ENCODE measurements at regions of chr10 and their contacts with region 1.

Region 1: DNA sequence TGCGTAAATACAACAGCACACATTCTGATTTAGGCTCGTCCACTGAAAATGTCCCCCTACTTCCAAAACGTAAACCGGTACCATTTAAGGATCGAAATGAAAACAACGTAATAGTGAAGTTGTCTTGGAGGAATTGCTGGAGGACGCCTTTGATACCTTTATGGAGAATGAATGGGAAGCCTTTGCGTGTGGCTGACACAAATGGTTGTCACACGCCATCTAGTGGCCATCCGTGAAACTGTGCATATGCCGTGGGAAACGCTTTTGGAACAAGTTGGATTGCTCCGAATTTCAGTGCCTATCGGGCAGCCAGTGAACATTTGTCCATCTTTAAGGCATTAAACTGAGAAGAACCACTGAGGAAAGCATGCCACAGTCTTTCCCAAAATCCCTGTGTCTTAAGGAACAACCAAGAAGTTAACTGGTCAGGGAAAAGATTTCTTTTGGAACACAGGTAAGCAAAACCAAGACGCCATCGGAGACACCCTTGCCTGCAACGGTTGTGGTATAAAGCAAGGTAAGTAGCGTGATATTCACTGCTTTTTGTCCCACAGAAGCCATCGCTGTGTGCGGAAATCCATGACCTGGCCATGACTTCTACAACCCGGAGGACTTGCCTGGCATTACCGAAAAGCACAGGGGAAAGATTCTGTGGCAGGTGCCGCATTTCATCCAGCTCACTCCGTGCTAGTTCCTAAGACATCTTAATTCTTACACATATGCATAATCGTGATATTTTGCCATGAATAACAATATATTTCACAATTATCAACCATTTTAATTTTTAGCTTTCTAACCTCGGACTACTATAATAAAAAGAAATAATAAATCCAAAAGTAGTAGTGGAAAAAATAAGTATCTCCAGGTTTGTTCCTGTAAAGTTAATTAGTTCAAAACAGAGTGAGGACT is 100.6 kb downstream of the FAM204A start:
- DNase-seq: peak; percentile 75
- ATAC-seq: no peak
- H3K4me3 Mint-ChIP-seq: no peak overlapping the region
- H3K27ac Mint-ChIP-seq: no peak overlapping the region
- H3K4me1 Mint-ChIP-seq: no peaks in the 10 kb centered on the region
- H3K27me3 Mint-ChIP-seq: peaks cover 30% of the 10 kb centered on the region

Region 2: DNA sequence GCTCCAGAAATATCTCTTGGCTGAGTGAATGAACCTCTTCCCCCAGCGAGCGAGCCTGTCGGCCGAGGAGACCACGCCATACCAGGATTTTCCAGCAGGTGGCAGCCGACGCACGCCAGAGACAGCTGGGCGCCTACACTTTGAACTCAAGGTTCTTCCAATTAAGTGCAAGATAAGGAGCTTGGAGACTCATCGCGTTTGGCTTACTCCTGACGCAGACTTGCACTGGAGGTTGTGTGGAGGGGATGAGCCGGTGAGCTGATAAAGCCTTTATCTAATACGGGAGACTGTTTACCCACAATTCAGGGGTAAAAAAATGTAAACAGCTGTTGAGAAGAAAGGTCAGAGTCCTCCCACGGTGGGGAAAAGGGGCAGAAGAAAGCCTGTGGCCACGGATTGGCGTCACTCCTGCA is 744.9 kb before region 1 on chr10:
- CTCF ChIA-PET with region 1: interaction called, 16 read pairs
- DNase-seq: peak; percentile 69
- ATAC-seq: peak; percentile 76
- H3K4me3 Mint-ChIP-seq: no peak overlapping the region
- H3K27ac Mint-ChIP-seq: no peak overlapping the region
- H3K4me1 Mint-ChIP-seq: peaks cover 3% of the 10 kb centered on the region
- H3K27me3 Mint-ChIP-seq: peaks cover 24% of the 10 kb centered on the region

Region 3: GRCh38 chr10:117537436-117537903 is 704.0 kb before region 1 on chr10:
- CTCF ChIA-PET with region 1: interaction called, 10 read pairs
- DNase-seq: no peak
- ATAC-seq: no peak
- H3K4me3 Mint-ChIP-seq: no peak overlapping the region
- H3K27ac Mint-ChIP-seq: no peak overlapping the region
- H3K4me1 Mint-ChIP-seq: peaks cover 5% of the 10 kb centered on the region
- H3K27me3 Mint-ChIP-seq: peaks cover 89% of the 10 kb centered on the region

Region 4: DNA sequence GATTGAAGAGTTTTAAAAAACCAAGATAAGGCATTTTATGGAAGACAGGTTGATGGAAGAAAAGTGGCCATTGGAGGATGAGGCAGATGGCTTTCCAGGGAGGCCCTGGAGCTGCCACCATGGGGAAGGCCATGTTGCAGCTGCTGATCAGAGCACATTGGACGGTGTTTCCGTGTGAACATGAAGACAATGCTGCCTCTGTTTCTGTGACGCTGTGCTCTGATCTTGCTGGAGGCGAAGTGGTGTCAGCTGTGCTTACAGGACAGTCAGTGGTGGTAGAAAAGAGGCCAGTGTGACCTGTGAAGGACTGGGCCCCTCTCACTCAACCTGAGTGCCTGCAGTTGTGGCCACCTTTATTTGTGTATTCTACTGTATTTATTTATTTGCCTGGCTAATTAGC is 32.3 kb before region 1 on chr10:
- CTCF ChIA-PET with region 1: no interaction called
- DNase-seq: no peak
- ATAC-seq: no peak
- H3K4me3 Mint-ChIP-seq: no peak overlapping the region
- H3K27ac Mint-ChIP-seq: no peak overlapping the region
- H3K4me1 Mint-ChIP-seq: no peaks in the 10 kb centered on the region
- H3K27me3 Mint-ChIP-seq: peaks cover 12% of the 10 kb centered on the region

Measured in activated CD8-positive, alpha-beta memory T cell treated with anti-CD3 and anti-CD28 coated beads, Interleukin-2, amount 10 ng/mL, durations not matched to agents 7 days and 5 days (primary cell).